Activated CD8-positive, alpha-beta T cell treated with anti-CD3 and anti-CD28 coated beads for 36 hours (primary cell): ENCODE measurements at regions of chr6 and their contacts with region 1.

Region 1: DNA sequence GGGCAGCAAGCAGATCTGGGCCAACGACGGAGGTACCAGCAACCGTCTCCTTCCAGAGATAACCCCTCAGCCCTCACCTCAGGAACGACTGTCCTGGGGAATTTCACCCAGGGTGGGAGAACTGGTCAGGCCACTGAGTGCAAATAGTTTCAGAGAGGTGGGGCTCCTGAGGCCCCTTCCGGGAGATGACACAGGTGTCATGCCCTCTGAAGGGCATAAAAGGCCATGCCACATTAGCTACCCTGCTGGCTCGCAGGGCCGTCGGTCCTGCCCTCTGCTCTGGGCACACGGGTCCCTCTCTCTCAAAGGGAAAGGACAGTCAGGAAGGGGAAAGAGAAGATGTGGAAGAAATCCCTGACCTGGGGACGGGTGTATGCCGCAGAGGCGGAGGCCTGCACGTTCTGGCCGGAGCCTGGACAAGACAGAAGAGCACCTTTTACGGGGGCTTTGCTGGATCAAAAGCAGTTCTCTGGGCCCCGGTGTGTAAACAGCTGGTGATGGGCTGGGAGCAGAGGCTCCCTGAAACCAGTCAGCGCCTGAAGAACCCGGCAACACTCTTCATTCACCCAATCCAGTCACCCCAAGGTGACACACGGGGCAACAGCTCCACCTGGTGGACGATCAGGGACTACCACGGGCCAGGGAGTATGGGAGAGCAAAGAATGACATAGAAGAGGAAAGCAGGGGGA is 6.4 kb upstream of the TAF8 start:
- DNase-seq: peak; percentile 94
- ATAC-seq: peak; percentile 31
- H3K4me3 Mint-ChIP-seq: peak overlapping the region; percentile 75
- H3K27ac Mint-ChIP-seq: peak overlapping the region; percentile 99
- H3K4me1 Mint-ChIP-seq: peaks cover 83% of the 10 kb centered on the region
- H3K27me3 Mint-ChIP-seq: no peaks in the 10 kb centered on the region
- CTCF ChIP-seq: peak; percentile 92

Region 2: DNA sequence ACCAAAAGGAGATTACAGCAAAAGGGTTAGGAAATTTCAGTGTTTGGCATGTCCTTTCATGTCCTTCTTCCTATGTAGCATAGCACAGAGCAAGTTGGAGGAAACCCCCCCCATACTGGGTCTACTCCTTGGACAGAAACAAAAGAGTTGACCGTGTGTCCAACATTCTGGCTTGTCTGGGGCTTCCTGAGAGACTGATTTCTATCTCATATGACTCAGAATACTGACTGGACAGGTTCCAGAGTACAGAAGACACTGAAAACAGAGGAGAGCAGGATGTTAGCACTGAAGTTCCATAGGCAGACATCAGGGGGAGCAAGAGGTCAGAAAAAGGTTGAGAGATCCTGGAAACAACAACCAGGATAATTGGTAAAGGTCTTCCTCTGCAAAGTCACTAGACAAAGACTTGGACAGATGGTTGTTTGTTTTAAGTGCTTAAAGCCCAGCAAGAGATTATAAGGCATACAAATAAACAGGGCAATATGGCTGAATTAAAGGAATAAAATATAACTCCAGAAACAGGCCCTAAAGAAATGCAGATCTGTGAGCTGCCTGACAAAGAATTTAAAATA is 197.2 kb before region 1 on chr6:
- CTCF ChIA-PET with region 1: interaction called, 86 read pairs
- POLR2A ChIA-PET with region 1: interaction called, 4 read pairs
- intact Hi-C with region 1: loop called (anchors 1 kb)
- DNase-seq: peak; percentile 66
- ATAC-seq: peak; percentile 96
- H3K4me3 Mint-ChIP-seq: no peak overlapping the region
- H3K27ac Mint-ChIP-seq: no peak overlapping the region
- H3K4me1 Mint-ChIP-seq: peaks cover 5% of the 10 kb centered on the region
- H3K27me3 Mint-ChIP-seq: no peaks in the 10 kb centered on the region
- CTCF ChIP-seq: peak; percentile 89

Region 3: DNA sequence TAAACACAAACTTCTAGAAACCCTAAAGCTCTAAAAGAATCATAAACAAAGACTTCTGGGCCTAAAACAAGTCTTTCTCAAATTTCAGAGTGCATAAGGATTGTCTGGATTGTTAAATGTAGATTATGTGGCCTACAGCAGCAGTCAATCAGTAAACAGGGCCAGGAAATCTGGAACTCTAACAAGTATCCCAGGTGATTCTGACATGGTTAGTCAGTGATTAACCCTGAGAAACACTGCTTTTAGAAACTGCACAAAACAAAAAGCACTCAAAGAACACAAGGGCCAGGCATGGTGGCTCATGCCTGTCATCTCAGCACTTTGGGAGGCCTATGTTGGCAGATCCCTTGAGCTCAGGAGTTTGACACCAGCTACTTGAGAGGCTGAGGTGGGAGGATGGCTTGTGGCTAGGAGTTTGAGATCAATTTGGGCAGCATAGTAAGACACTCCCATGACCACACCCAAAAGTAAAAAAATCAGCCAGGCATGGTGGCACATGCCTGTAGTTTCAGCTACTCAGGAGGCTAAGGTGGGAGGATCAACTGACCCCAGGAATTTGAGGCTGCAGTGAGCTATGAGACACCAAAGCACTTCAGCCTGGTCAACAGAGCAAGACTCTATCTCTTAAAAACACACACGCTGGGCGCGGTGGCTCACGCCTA is 128.9 kb before region 1 on chr6:
- CTCF ChIA-PET with region 1: interaction called, 119 read pairs
- POLR2A ChIA-PET with region 1: interaction called, 22 read pairs
- intact Hi-C with region 1: loop called (anchors 5 kb)
- DNase-seq: no peak
- ATAC-seq: no peak
- H3K4me3 Mint-ChIP-seq: no peak overlapping the region
- H3K27ac Mint-ChIP-seq: no peak overlapping the region
- H3K4me1 Mint-ChIP-seq: peaks cover 26% of the 10 kb centered on the region
- H3K27me3 Mint-ChIP-seq: no peaks in the 10 kb centered on the region
- CTCF ChIP-seq: no peak

Region 4: DNA sequence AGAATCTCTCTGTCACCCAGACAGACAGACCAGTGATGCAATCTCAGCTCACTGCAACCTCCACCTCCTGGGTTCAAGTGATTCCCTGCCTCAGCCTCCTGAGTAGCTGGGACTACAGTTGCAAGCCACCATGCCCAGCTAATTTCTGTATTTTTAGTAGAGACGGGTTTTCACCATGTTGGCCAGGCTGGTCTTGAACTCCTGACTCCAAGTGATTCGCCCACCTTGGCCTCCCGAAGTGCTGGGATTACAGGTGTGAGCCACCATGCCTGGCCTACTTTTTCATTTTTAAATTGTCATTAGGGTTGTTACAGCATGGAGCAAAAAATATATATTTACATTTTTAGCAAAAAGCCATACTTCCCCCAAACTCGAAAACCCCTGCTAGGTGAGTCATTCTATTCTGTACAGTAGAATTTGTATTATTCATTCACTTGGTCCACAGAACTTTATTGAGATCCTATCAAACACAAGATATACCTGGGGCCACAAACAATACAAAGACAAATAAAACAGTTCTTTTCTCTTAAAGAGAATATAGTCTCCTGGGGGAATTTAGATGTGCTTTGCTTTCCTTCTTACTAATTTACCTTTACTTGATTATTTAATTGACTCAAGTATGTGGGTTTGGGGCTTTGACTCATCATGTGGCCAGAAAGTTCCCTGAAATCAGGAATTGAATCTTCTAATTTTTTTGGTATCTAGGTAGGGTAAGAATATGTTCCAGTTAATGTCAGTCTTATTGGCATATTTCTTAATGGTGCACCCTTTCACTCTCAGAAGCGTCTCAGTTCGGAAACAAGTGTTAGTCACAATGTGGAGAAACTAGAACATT is 85.7 kb before region 1 on chr6:
- CTCF ChIA-PET with region 1: interaction called, 53 read pairs
- POLR2A ChIA-PET with region 1: interaction called, 9 read pairs
- intact Hi-C with region 1: loop called (anchors 5 kb)
- DNase-seq: peak; percentile 79
- ATAC-seq: peak; percentile 85
- H3K4me3 Mint-ChIP-seq: peak overlapping the region; percentile 11
- H3K27ac Mint-ChIP-seq: peak overlapping the region; percentile 96
- H3K4me1 Mint-ChIP-seq: peaks cover 77% of the 10 kb centered on the region
- H3K27me3 Mint-ChIP-seq: no peaks in the 10 kb centered on the region
- CTCF ChIP-seq: no peak

Region 5: DNA sequence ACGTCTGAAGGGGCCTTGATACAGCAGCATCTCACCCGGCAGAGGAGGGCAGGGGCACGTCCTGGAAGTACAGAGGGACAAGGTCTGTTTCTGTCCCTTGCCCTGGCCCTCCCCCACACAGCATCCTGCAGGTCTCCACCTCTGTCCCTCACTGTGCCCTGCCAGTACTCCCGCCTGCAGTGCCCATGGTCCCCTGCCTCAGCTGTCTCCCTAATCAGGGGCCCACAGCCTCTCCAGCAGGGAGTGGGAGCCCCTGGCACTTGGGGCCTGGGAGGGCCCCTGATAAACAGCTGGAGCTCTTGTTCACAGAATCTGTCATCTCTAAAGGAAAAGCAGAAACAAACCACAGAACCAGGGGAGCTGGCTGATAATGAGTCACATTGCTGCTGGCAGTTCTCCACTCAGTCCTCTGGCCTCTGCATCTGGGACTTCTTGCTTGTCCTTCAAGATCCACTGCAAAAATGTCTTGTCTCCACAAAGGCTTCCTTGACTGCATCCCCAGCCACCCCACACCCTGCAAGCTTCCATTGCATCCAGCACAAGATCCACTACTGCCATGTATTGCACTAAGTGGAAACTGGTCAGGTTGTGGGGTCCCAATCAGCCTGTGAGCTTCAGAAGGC is 26.8 kb before region 1 on chr6:
- CTCF ChIA-PET with region 1: interaction called, 23 read pairs
- POLR2A ChIA-PET with region 1: interaction called, 12 read pairs
- intact Hi-C with region 1: loop called (anchors 2 kb)
- DNase-seq: peak; percentile 74
- ATAC-seq: peak; percentile 66
- H3K4me3 Mint-ChIP-seq: peak overlapping the region; percentile 50
- H3K27ac Mint-ChIP-seq: peak overlapping the region; percentile 84
- H3K4me1 Mint-ChIP-seq: peaks cover 71% of the 10 kb centered on the region
- H3K27me3 Mint-ChIP-seq: no peaks in the 10 kb centered on the region
- CTCF ChIP-seq: no peak

Region 6: GRCh38 chr6:42075159-42075838 is 31.4 kb after region 1 on chr6:
- CTCF ChIA-PET with region 1: no interaction called
- POLR2A ChIA-PET with region 1: no interaction called
- intact Hi-C with region 1: no loop called
- DNase-seq: peak; percentile 73
- ATAC-seq: no peak
- H3K4me3 Mint-ChIP-seq: no peak overlapping the region
- H3K27ac Mint-ChIP-seq: no peak overlapping the region
- H3K4me1 Mint-ChIP-seq: no peaks in the 10 kb centered on the region
- H3K27me3 Mint-ChIP-seq: no peaks in the 10 kb centered on the region
- CTCF ChIP-seq: peak; percentile 73